Right cardiac atrium (tissue), 5 donors: ENCODE measurements at regions of chr18 and their contacts with region 1.

Region 1: DNA sequence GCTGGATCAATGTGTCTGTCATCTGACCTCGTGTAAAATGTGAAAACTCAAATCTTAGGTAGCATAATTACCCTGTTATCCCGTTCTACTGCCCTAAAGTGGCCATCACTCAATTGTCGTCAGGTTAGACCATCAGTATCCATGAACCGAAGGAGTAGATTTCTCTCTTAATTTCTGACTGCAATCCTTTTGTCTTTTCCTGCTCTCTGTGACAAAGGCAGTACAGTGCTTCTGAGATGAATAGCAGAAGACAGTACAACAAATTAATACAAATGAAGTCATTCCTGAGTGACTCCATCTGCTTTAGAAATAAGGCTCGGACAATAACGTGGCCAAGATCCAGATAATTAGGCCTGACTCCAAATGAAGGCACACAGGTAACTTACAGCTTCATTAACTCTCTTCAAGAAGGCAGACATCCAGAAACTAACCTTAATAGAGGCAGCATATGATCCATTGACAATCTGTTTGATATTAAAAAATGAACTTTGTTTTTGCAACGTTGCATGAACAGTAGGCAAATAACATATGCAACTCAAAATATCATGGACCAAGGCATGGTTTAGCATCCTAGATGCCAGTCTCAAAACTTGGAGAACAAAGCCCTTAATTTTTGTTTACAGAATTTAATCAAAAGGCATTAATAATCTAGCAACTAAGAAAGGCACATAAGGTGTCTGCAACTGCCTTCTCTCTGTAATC is 96.7 kb upstream of the CDH20 start:
- DNase-seq: no peak
- ATAC-seq: no peak
- H3K4me3 ChIP-seq: no peak overlapping the region
- H3K27ac ChIP-seq: no peak overlapping the region
- H3K4me1 ChIP-seq: no peaks in the 10 kb centered on the region
- H3K27me3 ChIP-seq: no peaks in the 10 kb centered on the region

Region 2: GRCh38 chr18:61141691-61142090 is 94.8 kb before region 1 on chr18:
- intact Hi-C with region 1: no loop called
- DNase-seq: no peak
- ATAC-seq: no peak
- H3K4me3 ChIP-seq: no peak overlapping the region
- H3K27ac ChIP-seq: no peak overlapping the region
- H3K4me1 ChIP-seq: no peaks in the 10 kb centered on the region
- H3K27me3 ChIP-seq: no peaks in the 10 kb centered on the region

Region 3: DNA sequence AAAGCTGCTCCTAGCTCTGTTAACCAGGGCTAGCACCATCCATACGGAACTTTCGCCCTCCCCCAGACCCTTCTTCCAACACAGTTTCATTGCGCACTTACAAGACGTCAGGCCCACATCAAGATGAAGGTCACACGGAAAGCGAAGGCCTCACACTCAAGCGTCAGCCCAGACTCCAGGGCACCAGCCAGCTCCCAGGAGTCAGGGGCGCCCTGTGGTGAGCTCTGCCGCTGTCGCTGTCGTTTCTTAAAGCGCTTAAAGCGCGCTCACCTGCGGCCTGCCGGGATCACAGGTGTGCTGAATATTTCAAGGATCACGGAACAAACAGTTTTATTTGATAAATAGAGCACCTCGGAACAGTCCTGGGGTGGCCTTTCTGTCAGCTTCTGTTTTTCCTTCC is 259.9 kb after region 1 on chr18:
- intact Hi-C with region 1: loop called in 1 of 4 experiments (anchors 10 kb)
- DNase-seq: no peak
- ATAC-seq: no peak
- H3K4me3 ChIP-seq: no peak overlapping the region
- H3K27ac ChIP-seq: no peak overlapping the region
- H3K4me1 ChIP-seq: no peaks in the 10 kb centered on the region
- H3K27me3 ChIP-seq: no peaks in the 10 kb centered on the region